Vagina (tissue), 2 donors: ENCODE measurements at regions of chr18 and their contacts with region 1.

Region 1: DNA sequence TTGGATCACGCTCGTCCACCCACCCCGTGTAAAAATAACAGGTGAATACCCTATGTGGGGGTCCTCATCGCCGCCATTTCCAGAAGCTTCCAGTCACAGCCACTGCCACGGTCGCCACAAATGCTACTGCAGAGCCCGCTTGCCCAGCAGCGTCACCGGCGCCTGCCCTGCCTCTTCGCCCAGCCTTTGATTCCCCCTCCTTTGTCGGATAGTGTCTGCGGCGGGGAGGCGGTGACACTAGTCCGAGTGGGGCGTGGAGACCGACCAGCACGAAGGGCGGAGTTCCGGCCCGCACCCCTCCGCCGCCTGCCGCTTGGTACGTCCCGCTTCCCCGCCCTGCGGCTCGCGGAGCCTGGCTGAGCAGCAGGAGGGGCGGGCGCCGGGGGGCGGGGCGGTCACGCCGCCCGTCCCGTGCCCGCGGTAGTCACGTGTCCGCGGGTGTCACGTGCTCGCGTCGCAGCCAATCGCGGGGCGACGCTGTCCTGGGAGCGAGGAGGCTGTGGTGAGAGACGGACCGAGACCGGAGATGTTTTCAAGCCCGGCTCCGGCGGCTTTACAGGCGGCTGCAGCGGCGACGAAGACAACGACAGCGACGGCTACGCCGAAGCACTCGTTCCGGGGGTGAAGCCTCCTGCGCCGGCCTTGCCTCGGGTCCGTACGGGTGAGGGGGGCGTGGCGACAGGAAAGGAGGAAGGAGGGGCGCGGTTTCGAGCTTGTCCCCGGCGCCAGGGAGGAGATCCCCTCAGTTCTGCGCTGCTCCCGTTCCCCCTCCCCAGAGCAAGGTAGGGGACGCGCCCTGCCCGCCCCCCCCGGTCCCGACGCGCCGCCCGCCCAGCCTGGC is at the start of gene ANKRD12:
- DNase-seq: peak; percentile 97 to 98
- H3K4me3 ChIP-seq: peak within 1 kb of the TSS; percentile 75 to 80
- H3K27ac ChIP-seq: peak within 1 kb of the TSS; percentile 100
- H3K4me1 ChIP-seq: peaks cover 46% of the 10 kb centered on the region
- H3K27me3 ChIP-seq: no peaks in the 10 kb centered on the region
- CTCF ChIP-seq: no peak
- POLR2A ChIP-seq: peak in 1 of 2 donors; percentile 85
- total RNA-seq, gene ANKRD12: 53.5 TPM

Region 2: GRCh38 chr18:8162802-8163201 is 973.7 kb before region 1 on chr18:
- intact Hi-C with region 1: no loop called
- DNase-seq: no peak
- H3K4me3 ChIP-seq: no peak overlapping the region
- H3K27ac ChIP-seq: no peak overlapping the region
- H3K4me1 ChIP-seq: no peaks in the 10 kb centered on the region
- H3K27me3 ChIP-seq: no peaks in the 10 kb centered on the region
- CTCF ChIP-seq: no peak
- POLR2A ChIP-seq: no peak

Region 3: DNA sequence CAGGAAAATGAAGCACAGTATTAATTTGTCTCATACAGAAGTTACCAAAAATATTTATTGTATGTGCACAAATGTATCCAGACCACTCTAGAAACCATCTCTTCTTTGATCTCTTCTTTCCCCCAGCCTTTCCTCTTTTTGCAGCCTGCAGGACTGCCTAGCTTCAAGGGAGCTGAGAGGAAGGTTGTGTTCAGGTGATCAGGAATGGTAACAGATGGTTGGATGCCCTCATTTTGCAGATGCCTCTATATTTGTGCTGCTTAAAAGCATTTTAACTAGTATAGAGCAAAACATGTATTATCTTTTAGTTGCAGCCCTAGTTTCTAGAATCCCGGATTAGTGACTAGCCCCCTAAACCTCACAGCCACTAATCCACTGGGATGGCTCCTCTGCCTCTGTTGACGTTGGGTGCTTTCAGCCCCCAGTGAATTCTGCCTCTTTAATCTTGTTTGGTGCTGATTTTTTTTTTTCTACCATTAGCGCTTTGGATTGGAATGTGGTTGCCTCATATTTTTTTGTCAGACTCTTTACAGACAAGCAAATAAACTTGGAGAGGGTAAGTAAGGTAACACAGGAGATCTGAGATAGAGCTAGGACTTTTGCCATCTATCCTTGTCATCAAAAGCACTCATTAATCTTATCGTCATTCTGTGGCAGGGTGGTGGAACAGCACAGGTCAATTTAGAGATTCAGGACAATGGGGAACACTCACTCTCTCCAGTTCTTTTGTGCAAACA is 137.9 kb before region 1 on chr18:
- intact Hi-C with region 1: loop called (anchors 5 kb)
- DNase-seq: no peak
- H3K4me3 ChIP-seq: no peak overlapping the region
- H3K27ac ChIP-seq: no peak overlapping the region
- H3K4me1 ChIP-seq: no peaks in the 10 kb centered on the region
- H3K27me3 ChIP-seq: no peaks in the 10 kb centered on the region
- CTCF ChIP-seq: no peak
- POLR2A ChIP-seq: no peak

Region 4: DNA sequence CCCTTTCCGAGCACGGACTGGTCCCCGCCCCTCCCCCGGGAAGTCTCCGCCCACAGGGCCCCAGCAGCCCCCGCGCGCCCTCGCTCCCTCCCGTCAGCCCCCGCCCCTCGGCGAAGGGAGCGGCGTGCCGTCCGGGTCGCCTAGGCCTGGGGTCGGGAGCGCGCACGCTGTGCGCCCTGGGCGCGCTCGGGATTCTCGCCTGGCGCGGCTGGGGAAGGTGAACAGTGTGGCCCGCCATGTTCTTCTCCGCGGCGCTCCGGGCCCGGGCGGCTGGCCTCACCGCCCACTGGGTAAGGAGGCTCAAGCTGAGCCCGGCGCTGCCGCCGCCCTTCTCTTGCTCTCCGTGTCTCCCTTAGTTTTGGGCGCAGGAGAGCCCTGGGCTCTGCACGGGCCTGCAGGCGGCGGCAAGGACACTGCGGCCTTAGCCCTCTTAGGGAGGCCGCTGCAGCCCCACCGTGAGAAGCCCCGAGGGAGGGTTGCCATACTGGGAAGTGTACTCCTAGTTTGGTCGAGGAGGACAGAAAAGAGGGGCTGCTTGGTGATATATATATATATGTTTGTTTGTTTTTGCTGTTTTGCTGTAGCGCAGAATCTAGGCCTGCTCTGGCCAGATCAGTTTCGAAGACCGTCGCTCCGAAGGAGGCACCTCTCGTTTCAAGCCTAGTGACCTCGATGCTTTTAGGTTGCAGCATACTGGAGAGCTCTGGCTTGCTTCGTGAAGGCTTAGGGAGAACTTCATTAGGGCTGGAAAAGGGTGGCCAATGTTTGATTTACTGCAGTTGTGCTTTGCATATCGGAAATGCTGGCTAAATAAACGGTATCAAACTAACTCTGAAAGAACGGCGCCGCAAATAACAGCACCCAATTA is 33.8 kb before region 1 on chr18 and contains the start of gene NDUFV2:
- intact Hi-C with region 1: loop called (anchors 1 kb)
- DNase-seq: peak in 1 of 2 donors; percentile 96
- H3K4me3 ChIP-seq: peak within 1 kb of the TSS; percentile 47 to 78
- H3K27ac ChIP-seq: peak within 1 kb of the TSS; percentile 93
- H3K4me1 ChIP-seq: peaks cover 53% of the 10 kb centered on the region
- H3K27me3 ChIP-seq: no peaks in the 10 kb centered on the region
- CTCF ChIP-seq: no peak
- POLR2A ChIP-seq: peak; percentile 30 to 91
- total RNA-seq, gene NDUFV2: 75.1 TPM